BJ (cell line): ENCODE measurements at regions of chr19 and their contacts with region 1.

Region 1: DNA sequence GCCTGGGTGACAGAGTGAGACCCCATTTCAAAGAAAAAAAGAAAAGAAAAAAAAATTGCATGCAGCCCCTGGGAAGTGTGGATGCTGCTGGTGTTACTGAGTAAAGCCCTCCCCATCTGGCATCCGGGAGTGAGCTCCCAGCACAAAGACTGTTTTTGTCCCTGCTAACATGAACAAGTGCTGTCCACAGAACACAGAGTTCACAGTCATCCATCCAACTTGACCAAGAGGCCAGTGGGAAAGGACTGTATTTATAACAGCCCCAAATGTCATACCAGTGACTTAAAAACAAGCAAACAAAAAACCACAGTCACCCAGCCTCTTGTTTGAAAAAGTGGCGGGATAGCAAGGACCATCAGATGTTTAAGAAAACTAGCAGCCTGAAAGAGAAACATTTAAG is 10.8 kb downstream of the FBXO17 start:
- DNase-seq: no peak
- H3K4me3 ChIP-seq: no peak overlapping the region
- H3K27me3 ChIP-seq: no peaks in the 10 kb centered on the region
- CTCF ChIP-seq: no peak

Region 2: DNA sequence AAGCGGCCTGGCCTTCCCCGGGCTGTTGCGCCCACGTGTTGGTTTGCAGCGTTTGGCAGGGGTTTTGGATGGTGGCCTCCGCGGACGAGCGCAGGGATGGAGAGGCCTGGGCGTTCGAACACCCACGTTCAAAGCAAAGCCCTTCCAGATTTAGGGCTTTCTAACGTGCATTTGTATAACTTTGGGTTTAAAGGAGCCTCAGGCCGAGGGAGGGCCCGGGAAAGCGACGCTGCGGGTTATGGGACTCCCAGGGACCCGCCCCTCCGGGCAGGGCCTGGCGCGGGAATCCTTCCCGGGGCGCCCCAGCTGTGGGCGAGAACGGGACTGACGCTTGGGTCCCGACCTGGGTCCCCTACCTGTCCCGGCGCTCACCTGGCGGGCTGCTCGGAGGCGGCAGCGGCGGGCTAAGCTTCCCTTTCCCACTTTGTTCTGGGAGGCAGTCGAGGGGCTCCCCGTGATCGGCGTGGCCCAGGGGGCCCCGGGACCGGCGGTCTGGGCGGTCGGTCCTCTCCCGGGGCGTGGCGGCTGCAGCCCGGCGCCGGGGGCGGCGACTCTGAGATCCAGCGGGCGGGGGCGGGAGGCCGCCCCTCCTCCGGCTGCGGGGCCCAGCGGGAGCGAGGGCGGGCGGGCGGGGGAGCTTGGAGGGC is 10.6 kb after region 1 on chr19 and contains the start of gene FBXO17:
- CTCF ChIA-PET with region 1: interaction called, 31 read pairs
- POLR2A ChIA-PET with region 1: no interaction called
- DNase-seq: no peak
- H3K4me3 ChIP-seq: peak within 1 kb of the TSS; percentile 70
- H3K27me3 ChIP-seq: no peaks in the 10 kb centered on the region; the same call in 1 of the 2 replicates
- CTCF ChIP-seq: no peak
- polyA plus RNA-seq, gene FBXO17: 14.5 and 19.5 TPM in 2 replicates